ENCODE measurements at regions of chr14 and their contacts with region 1.

Region 1: DNA sequence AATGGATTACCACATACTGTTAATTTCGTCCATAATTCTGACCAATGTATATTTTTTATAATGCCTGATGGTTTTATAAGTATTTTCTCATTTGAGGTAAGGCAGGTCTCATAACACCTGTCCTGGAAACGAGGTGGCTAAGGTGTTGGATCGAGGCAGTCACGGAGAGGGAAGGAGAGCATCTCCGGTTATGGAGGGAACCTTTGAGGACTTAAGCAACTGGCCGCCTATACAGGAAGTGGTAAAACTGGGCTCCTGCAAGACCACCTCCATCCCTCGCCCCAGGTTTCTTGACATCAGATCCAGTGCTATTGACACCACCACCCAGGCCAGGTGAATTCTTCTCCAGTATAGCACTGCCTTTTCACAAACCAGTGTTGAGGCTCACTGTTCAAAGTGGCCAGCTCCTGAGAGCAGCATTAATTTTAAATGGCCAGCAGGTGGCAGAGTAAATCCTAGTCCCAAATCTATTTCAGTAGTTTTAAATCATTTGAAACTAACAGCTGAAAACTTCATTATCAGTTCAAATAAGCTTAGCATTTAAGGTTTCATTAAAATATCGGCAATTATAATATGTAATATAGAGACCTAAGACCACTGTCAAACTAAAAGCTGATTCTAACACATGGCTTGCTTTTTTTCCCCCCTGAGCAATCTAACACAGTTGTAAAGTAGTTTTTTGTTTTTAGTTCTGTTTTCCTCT is 100.8 kb downstream of the PPM1A start:
- DNase-seq: peak; percentile 33
- H3K4me3 ChIP-seq: no peak overlapping the region
- H3K27ac ChIP-seq: no peak overlapping the region
- H3K27me3 ChIP-seq: no peaks in the 10 kb centered on the region
- CTCF ChIP-seq: peak; percentile 63

Region 2: GRCh38 chr14:59897761-59898383 is 451.9 kb before region 1 on chr14:
- CTCF ChIA-PET with region 1: no interaction called
- POLR2A ChIA-PET with region 1: no interaction called
- DNase-seq: no peak
- H3K4me3 ChIP-seq: no peak overlapping the region
- H3K27ac ChIP-seq: no peak overlapping the region
- H3K27me3 ChIP-seq: peaks cover 2% of the 10 kb centered on the region
- CTCF ChIP-seq: 0 out of 2 replicates have a peak, but pooled peaks have one; percentile 20

Region 3: DNA sequence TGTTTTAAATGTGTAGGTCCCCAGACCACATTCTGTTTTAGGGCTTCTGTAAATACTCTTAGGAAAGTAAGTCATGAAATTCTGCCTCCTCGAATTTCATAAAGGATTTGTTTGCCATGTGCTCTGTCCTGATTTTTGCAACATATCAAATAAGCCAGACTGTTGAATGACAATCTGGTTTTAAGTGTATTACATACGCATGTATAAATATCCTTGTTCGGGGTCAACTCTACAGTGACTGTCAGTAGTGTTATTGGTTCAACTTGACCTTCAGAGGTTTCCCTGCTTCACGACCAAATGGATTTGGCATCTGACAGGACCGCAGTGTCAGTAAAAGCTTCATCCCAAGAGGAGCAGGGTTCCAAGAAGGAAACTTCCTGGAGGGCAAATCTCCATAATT is 48.1 kb before region 1 on chr14:
- CTCF ChIA-PET with region 1: interaction called, 19 read pairs
- POLR2A ChIA-PET with region 1: no interaction called
- DNase-seq: no peak
- H3K4me3 ChIP-seq: no peak overlapping the region
- H3K27ac ChIP-seq: no peak overlapping the region
- H3K27me3 ChIP-seq: no peaks in the 10 kb centered on the region
- CTCF ChIP-seq: no peak

Region 4: DNA sequence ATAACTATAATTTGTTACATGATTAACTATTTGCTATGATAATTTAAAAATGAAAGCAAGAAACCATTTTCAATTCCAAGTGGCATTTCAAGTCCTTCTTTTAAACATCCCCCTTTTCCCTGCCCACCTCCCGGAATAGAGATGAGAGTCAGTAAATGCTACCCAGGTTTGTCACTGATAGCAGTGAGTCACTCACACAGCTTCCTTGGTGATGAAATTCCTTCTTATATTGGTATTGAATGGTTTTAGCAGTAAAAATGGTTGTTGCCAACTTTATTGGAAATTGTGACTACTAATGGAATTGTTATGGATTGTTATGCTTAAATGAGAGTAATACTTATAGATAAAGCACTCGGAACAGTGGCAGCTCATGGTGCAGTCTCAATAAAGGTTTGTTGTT is 10.2 kb before region 1 on chr14:
- CTCF ChIA-PET with region 1: interaction called, 19 read pairs
- POLR2A ChIA-PET with region 1: no interaction called
- DNase-seq: no peak
- H3K4me3 ChIP-seq: no peak overlapping the region
- H3K27ac ChIP-seq: no peak overlapping the region
- H3K27me3 ChIP-seq: peaks cover 5% of the 10 kb centered on the region
- CTCF ChIP-seq: no peak

Region 5: GRCh38 chr14:60561845-60562746 is 212.3 kb after region 1 on chr14:
- CTCF ChIA-PET with region 1: interaction called, 195 read pairs
- POLR2A ChIA-PET with region 1: no interaction called
- DNase-seq: peak; percentile 44
- H3K4me3 ChIP-seq: no peak overlapping the region
- H3K27ac ChIP-seq: no peak overlapping the region
- H3K27me3 ChIP-seq: no peaks in the 10 kb centered on the region
- CTCF ChIP-seq: peak; percentile 79

Region 6: GRCh38 chr14:61269321-61270083 is 919.7 kb after region 1 on chr14:
- CTCF ChIA-PET with region 1: interaction called, 11 read pairs
- POLR2A ChIA-PET with region 1: no interaction called
- DNase-seq: no peak
- H3K4me3 ChIP-seq: peak overlapping the region; percentile 62
- H3K27ac ChIP-seq: no peak overlapping the region
- H3K27me3 ChIP-seq: no peaks in the 10 kb centered on the region
- CTCF ChIP-seq: peak; percentile 76

Measured in AG04450 (cell line).